ENCODE measurements at regions of chr3 and their contacts with region 1.

Region 1: GRCh38 chr3:41893977-41894376 is 67.9 kb downstream of the ULK4 start:
- DNase-seq: peak; percentile 13
- ATAC-seq: no peak
- H3K4me3 ChIP-seq: no peak overlapping the region
- H3K27ac ChIP-seq: no peak overlapping the region
- H3K4me1 ChIP-seq: no peaks in the 10 kb centered on the region
- H3K27me3 ChIP-seq: no peaks in the 10 kb centered on the region
- CTCF ChIP-seq: peak; percentile 51; the same call in 1 of the 2 replicates

Region 2: GRCh38 chr3:42012935-42013690 is 119.1 kb after region 1 on chr3:
- CTCF ChIA-PET with region 1: no interaction called
- POLR2A ChIA-PET with region 1: no interaction called
- in situ Hi-C with region 1: no loop called
- intact Hi-C with region 1: loop called (anchors 10 kb)
- DNase-seq: no peak
- ATAC-seq: peak; percentile 95
- H3K4me3 ChIP-seq: peak overlapping the region; percentile 57 to 81
- H3K27ac ChIP-seq: peak overlapping the region; percentile 78
- H3K4me1 ChIP-seq: peaks cover 9% of the 10 kb centered on the region
- H3K27me3 ChIP-seq: no peaks in the 10 kb centered on the region
- CTCF ChIP-seq: no peak; the same call in 1 of the 2 replicates

Region 3: GRCh38 chr3:42096796-42097565 is 203.0 kb after region 1 on chr3:
- CTCF ChIA-PET with region 1: interaction called, 3 read pairs
- POLR2A ChIA-PET with region 1: no interaction called
- in situ Hi-C with region 1: no loop called
- intact Hi-C with region 1: loop called (anchors 1 kb)
- DNase-seq: no peak
- ATAC-seq: 0 out of 2 replicates have a peak, but pooled peaks have one; percentile 33
- H3K4me3 ChIP-seq: no peak overlapping the region
- H3K27ac ChIP-seq: peak overlapping the region; percentile 9; the same call in 1 of the 2 replicates
- H3K4me1 ChIP-seq: peaks cover 15% of the 10 kb centered on the region
- H3K27me3 ChIP-seq: no peaks in the 10 kb centered on the region
- CTCF ChIP-seq: no peak

Region 4: DNA sequence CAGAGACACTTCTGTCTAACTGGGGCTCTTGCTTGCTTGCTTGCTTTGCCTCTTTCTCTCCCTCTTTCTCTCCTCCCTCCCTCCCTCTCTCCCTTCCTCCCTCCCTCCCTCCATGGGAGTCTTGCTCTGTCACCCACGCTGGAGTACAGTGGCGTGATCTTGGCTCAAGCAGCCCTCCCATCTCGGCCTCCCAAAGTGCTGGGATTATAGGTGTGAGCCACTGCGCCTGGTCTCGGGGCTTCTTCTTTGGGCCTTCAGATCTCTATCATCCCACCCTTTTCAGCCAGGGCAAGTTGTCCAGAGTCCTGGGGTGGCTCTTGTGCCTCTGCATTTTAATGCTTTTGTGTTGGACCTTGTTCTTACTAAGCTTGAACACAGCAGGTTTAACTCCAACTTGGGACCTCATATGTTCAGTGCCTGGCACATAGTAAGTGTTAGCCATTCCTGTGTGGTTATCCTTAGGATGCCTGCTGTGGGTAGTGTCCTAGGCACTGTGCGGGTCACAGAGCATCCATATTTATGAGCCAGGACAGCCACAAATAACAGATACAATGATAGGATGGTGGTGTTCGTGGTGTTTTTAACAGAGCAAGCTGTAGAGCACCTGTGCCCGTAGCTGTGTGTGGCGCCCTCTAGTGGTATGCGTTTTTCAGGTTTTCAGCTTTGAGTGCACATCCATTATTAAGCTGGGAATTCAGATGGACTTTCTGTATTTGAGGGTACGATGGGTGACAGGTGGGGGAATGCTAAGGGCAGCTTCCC is 296.9 kb after region 1 on chr3:
- CTCF ChIA-PET with region 1: no interaction called
- POLR2A ChIA-PET with region 1: no interaction called
- in situ Hi-C with region 1: no loop called
- intact Hi-C with region 1: loop called (anchors 2 kb)
- DNase-seq: peak; percentile 36
- ATAC-seq: peak; percentile 84
- H3K4me3 ChIP-seq: no peak overlapping the region
- H3K27ac ChIP-seq: no peak overlapping the region
- H3K4me1 ChIP-seq: no peaks in the 10 kb centered on the region
- H3K27me3 ChIP-seq: no peaks in the 10 kb centered on the region
- CTCF ChIP-seq: peak; percentile 89

Measured in Panc1 (cell line).